ENCODE measurements at regions of chr10 and their contacts with region 1.

Region 1: DNA sequence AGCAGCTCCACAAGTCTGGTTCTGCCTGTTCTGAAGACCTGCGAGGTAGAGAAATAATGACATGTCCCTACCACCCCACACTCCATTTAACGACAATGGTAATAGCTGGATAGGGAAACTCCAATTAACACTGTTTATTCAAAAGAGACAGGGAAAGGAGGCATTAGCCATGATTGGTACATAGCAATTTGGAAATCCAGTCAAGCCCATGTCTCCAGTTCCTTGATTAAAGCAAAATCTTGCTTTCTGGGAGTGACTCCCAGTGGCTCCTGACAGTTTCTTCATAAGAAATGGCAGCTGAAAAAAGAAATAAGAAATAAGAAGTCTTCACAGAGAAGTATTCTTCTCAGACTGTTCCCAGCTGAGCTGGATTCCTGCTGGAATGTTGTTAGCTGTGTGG is 140.7 kb upstream of the LYZL2 start:
- DNase-seq: no peak
- H3K4me3 Mint-ChIP-seq: no peak overlapping the region
- H3K27ac Mint-ChIP-seq: no peak overlapping the region
- H3K4me1 Mint-ChIP-seq: no peaks in the 10 kb centered on the region
- H3K27me3 Mint-ChIP-seq: no peaks in the 10 kb centered on the region

Region 2: DNA sequence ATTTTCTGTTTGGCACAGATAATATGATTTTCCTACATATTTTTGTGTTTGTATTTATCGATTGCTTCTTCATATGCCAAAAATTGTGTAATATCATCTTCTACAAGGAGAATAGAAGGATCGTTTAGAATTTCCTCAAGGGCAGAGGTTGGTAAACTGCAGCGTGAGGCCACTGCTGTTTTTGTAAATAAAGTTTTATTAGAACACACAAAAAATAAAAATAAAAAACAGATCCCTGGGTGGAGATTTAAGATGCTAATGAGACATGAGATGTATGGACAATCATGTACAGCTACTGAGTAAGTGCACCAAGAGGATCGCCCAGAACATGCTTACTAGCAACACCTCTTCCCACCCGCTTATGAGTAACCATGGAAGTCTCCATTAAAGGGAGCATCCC is 150.3 kb before region 1 on chr10:
- CTCF ChIA-PET with region 1: no interaction called
- POLR2A ChIA-PET with region 1: no interaction called
- DNase-seq: no peak
- H3K4me3 Mint-ChIP-seq: no peak overlapping the region
- H3K27ac Mint-ChIP-seq: no peak overlapping the region
- H3K4me1 Mint-ChIP-seq: no peaks in the 10 kb centered on the region
- H3K27me3 Mint-ChIP-seq: peaks cover 19% of the 10 kb centered on the region

Region 3: DNA sequence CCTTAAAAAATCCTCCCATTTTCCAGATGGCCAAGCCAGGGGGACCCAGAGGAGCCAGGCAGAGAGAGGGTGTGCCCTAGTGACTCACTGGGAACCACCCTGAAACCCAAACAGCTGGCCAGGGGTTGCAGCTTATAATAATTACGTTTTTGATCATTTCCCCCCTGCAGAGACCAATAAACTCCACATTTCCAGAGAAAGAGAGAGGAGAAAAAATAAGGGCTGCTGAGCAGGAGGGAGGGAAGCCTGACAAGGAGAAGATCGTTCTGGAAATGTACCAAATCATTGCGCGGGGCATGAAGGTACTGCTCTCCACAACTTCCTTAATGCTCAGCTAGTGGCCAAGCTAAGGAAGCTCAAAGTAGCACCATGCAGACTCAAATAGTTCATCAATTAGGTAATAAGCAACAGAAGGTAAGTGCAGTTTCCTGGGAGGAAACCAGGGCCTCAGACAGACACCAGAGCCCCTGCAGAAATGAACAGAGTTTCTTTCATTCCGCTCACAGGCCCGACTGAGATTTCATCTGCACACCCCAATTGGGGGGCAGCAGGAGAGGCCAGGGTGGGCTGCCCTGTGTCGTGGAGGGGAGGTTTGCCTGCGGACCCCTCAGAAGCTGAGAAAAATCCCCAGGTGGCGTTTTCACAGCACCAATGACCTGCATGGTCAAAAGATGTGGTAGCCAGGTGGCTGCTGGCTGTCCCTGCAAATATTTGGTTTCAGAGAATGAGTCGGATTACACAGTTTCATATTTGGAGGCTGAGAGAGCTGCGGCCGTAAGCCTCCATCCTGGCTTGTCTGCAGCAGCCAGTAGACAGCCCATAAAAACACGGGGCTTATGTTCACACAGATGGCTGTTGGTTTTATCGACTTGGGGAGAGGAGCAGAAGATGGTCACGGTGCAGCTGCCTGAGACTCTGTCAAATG is 12.6 kb after region 1 on chr10:
- CTCF ChIA-PET with region 1: interaction called, 18 read pairs
- POLR2A ChIA-PET with region 1: no interaction called
- DNase-seq: no peak
- H3K4me3 Mint-ChIP-seq: no peak overlapping the region
- H3K27ac Mint-ChIP-seq: peak overlapping the region; percentile 52
- H3K4me1 Mint-ChIP-seq: peaks cover 20% of the 10 kb centered on the region
- H3K27me3 Mint-ChIP-seq: peaks cover 3% of the 10 kb centered on the region

Measured in activated CD4-positive, alpha-beta T cell treated with anti-CD3 and anti-CD28 coated beads, Interleukin-2, amount 10 ng/mL, durations not matched to agents 7 days and 5 days (primary cell).